ENCODE measurements at regions of chr2 and their contacts with region 1.

Region 1: DNA sequence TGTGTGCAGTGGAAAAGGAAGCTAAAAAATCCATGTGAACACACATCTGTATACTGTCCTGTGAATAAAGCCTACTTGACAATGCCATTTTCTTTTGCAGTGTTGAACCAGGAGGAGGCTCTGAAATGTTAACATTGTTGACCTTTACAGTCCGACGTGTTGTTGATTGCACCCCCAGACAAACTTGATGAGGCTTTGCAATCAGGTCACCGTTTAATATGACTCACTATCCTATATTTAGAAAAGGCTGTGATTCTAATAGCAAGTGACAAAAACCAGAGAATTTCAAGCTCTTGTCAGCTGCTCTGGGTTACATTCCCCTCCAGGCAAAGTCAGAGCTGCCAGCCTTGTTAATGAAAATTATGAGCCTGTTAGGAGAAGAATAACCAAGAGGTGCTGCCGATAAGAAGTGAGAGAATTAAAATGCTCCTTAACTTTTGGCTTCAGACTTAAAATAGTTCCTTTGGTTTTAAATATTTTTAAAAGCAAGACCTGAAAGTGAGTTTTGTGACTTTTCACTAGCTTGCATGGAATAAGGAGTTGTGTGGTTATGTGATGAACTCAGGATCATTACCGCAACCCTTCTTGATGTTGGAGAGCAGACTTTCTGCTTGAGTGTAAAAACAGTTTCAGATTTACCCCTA is 162.1 kb downstream of the QPCT start:
- DNase-seq: peak in 1 of 2 donors; percentile 23
- ATAC-seq: peak; percentile 83 to 96 (median 92)
- H3K4me3 ChIP-seq: no peak overlapping the region
- H3K27ac ChIP-seq: peak overlapping the region; percentile 49 to 93 (median 82)
- H3K4me1 ChIP-seq: peaks cover 0 to 36% (median 13%) of the 10 kb centered on the region in 9 donors
- H3K27me3 ChIP-seq: no peaks in the 10 kb centered on the region
- CTCF ChIP-seq: peak in 1 of 9 donors; percentile 10

Region 2: DNA sequence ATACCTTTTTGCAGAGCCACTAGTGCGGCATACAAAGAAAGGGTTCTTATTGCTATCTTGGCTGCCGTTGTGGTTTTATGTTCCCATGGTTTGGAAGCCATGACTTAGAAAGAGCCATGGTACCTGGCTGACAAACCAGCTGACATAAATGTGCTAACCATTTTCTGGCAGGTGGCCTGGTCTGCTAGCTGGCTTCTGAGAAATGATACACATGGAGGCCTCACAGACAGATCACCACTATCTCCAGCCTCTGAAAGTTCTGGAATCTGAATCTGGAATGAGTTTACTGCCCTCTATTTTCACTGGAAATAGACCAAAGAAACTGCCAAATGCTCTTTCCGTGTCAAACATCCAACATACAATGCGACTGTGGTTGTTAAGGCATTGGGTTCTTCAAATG is 38.4 kb before region 1 on chr2:
- intact Hi-C with region 1: no loop called
- DNase-seq: no peak
- ATAC-seq: peak in 4 of 8 donors; percentile 44 to 82 (median 72)
- H3K4me3 ChIP-seq: no peak overlapping the region
- H3K27ac ChIP-seq: peak overlapping the region in 1 of 10 donors; percentile 6
- H3K4me1 ChIP-seq: peaks cover 0 to 14% (median 0%) of the 10 kb centered on the region in 9 donors
- H3K27me3 ChIP-seq: no peaks in the 10 kb centered on the region
- CTCF ChIP-seq: no peak

Region 3: DNA sequence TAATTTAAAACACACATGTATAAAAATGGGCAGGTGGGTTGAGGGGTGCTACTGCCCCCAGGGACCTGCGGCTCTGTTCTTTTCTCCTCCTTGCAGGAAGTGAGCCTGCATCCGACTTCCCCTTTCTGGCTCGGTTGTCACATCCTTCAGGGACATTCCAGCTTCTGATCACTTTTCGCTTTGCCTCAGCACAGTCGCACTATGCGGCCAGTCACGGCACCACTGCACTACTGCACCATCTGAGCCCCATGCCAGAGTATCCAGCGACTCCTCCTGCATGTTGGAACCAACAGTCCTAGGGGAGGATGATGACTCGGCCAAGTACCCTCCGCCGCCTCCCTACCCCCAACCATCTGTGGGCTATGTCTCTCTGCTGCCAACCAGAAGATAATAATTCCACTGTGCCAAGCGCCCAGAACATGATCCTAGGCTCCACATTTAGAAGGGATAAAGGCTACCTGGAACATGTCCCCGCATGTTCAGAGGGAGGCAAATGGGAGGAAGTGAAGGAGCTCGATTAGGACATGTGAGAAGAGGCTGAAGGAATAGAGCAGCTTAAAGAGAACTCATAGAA is 147.4 kb after region 1 on chr2:
- intact Hi-C with region 1: loop called in 1 of 10 experiments (anchors 5 kb)
- DNase-seq: peak; percentile 68
- ATAC-seq: peak; percentile 59 to 86 (median 76)
- H3K4me3 ChIP-seq: peak overlapping the region in 7 of 10 donors; percentile 6 to 40 (median 17)
- H3K27ac ChIP-seq: peak overlapping the region; percentile 77 to 99 (median 90)
- H3K4me1 ChIP-seq: peaks cover 46 to 100% (median 97%) of the 10 kb centered on the region in 9 donors
- H3K27me3 ChIP-seq: no peaks in the 10 kb centered on the region
- CTCF ChIP-seq: no peak

Measured in heart right ventricle (tissue), 16 donors.